Activated naive CD4-positive, alpha-beta T cell treated with anti-CD3 and anti-CD28 coated beads for 36 hours (primary cell): ENCODE measurements at regions of chr5 and their contacts with region 1.

Region 1: GRCh38 chr5:169583424-169584204 is at the start of gene SPDL1:
- DNase-seq: peak; percentile 97
- H3K4me3 Mint-ChIP-seq: peak within 1 kb of the TSS; percentile 96
- H3K27ac Mint-ChIP-seq: peak within 1 kb of the TSS; percentile 94
- H3K4me1 Mint-ChIP-seq: peaks cover 28% of the 10 kb centered on the region
- H3K27me3 Mint-ChIP-seq: no peaks in the 10 kb centered on the region
- total RNA-seq, gene SPDL1: 26.5 to 29.9 TPM

Region 2: DNA sequence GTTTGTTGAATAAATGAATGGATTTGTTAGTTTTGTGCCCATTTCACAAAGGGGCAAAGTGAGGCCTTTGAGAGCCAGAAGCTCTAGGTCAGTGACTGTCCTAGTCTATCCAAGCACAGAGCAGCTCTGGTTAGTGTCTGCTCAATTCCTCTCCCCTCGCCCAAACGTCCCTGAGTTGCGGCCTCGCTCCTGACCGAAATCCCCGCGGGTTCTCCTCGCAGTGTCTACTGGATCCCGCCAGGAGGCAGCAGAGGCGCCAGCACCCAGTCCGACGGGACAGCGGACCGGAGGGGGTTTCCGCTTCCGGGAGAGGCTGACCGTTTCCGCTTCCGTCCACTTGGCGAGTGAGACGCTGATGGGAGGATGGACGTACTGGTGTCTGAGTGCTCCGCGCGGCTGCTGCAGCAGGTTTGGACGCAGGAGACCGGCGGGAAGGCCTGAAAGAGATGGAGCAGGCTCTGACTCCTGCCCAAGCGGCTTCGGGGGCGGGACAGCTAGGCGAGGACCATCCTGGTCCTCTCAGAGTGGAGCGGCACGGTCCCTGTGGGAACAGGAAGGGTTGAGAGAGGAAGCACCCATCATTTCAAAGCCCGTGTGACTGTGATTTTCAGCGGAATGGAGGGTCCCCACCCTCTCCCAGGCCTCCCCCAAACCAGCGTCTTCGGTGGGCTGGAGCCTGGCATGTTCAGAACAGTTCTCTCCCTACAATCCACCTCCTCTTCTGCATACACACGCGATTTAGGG is 1097.3 kb before region 1 on chr5 and contains the start of gene RARS1:
- CTCF ChIA-PET with region 1: no interaction called
- intact Hi-C with region 1: loop called (anchors 5 kb)
- DNase-seq: peak; percentile 94
- H3K4me3 Mint-ChIP-seq: peak within 1 kb of the TSS; percentile 98
- H3K27ac Mint-ChIP-seq: peak within 1 kb of the TSS; percentile 91
- H3K4me1 Mint-ChIP-seq: peaks cover 34% of the 10 kb centered on the region
- H3K27me3 Mint-ChIP-seq: no peaks in the 10 kb centered on the region
- total RNA-seq, gene RARS1: 80.9 to 84.0 TPM

Region 3: GRCh38 chr5:168836603-168837231 is 746.9 kb before region 1 on chr5:
- CTCF ChIA-PET with region 1: interaction called, 3 read pairs
- intact Hi-C with region 1: loop called (anchors 2 kb)
- DNase-seq: peak; percentile 53
- H3K4me3 Mint-ChIP-seq: peak overlapping the region; percentile 46
- H3K27ac Mint-ChIP-seq: peak overlapping the region; percentile 73
- H3K4me1 Mint-ChIP-seq: peaks cover 31% of the 10 kb centered on the region
- H3K27me3 Mint-ChIP-seq: peaks cover 18% of the 10 kb centered on the region

Region 4: DNA sequence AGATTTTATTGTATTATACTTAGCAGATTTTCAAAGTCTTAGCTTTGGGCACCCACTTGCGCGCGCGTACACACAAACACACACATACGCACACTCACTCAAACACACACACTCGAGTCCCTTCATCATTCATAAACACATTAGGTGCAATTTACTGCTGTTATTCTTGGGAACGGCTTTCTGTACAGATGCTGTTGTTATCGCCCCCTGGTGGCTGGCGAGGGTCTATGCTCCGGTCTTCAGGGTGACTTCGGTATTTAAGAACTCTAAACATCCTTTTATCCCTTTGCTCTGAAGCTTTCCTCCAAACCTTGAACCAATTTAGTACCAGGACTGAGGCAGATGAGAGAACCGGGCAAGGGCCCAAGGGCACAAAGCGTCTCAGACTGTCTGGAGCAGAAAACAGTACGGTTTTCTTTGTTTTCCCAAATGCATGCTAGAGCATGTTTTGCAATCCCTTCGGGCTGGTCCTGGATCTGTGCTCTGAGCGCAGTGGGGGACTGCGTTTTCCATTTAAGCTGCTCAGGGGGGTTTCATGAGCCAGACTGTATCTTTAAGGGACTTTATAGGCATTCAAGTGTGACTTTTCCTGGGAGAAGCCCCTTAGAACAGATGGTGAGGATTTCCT is 281.0 kb before region 1 on chr5:
- CTCF ChIA-PET with region 1: no interaction called
- intact Hi-C with region 1: loop called (anchors 1 kb)
- DNase-seq: peak; percentile 79
- H3K4me3 Mint-ChIP-seq: no peak overlapping the region
- H3K27ac Mint-ChIP-seq: no peak overlapping the region
- H3K4me1 Mint-ChIP-seq: peaks cover 14% of the 10 kb centered on the region
- H3K27me3 Mint-ChIP-seq: peaks cover 51% of the 10 kb centered on the region

Region 5: DNA sequence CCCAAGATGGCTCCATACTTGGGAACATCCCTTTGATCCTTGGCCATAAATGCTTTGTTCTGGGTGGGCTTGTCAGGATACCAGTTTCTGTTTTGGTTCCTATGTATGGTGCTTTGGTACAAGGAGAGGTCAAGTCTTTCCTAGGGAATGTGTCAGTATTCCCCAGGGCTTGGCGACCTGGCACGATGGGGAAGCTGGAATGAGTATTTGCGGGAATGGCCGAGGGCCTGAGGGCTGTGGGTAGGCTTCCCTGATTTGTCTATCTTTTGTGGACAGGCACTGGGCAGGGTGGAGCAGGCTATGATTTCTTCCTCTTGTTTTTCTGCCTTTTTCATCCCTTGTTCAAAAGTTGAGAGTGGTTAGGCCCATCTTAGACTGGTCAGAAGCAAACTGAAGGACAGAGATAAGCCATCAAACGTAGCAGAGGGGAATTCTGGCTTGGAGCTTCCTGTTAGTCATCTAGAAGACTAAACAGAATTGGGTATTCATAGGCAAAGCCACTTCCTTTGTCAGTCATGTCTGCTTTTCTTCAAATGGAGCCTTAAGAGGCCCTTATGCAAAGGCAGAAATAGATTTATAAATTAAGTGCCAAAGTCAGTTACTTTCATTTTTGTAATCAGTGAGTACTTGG is 67.2 kb after region 1 on chr5:
- CTCF ChIA-PET with region 1: no interaction called
- intact Hi-C with region 1: loop called (anchors 1 kb)
- DNase-seq: peak; percentile 64
- H3K4me3 Mint-ChIP-seq: peak overlapping the region; percentile 49
- H3K27ac Mint-ChIP-seq: peak overlapping the region; percentile 94
- H3K4me1 Mint-ChIP-seq: peaks cover 92% of the 10 kb centered on the region
- H3K27me3 Mint-ChIP-seq: no peaks in the 10 kb centered on the region

Region 6: DNA sequence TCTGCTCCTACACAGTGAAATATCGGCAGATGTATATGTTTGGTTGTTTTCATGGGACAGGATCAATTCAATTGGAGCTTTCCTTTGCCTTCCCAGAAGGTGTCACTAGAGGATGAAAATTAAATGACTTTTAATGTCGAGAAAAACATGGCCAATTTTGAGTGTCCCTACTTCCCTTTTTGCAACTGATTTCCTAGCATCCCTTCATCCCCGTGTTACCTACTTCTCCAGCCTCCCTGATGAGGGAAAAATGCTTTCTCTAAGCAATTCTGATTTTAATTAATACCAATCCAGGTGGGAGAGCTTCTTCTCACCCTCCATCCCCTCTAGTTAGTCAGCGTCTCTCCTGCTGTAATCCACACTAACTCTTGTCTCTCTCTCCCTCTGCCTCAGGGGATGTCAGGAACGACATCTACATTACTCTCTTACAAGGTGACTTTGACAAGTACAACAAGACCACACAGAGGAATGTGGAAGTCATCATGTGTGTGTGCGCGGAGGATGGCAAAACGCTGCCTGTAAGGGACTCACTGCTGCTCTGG is 118.4 kb after region 1 on chr5:
- CTCF ChIA-PET with region 1: no interaction called
- intact Hi-C with region 1: loop called (anchors 1 kb)
- DNase-seq: no peak
- H3K4me3 Mint-ChIP-seq: no peak overlapping the region
- H3K27ac Mint-ChIP-seq: peak overlapping the region; percentile 59
- H3K4me1 Mint-ChIP-seq: peaks cover 41% of the 10 kb centered on the region
- H3K27me3 Mint-ChIP-seq: no peaks in the 10 kb centered on the region

Region 7: GRCh38 chr5:169812786-169813185 is 229.2 kb after region 1 on chr5:
- CTCF ChIA-PET with region 1: no interaction called
- intact Hi-C with region 1: no loop called
- DNase-seq: no peak
- H3K4me3 Mint-ChIP-seq: no peak overlapping the region
- H3K27ac Mint-ChIP-seq: no peak overlapping the region
- H3K4me1 Mint-ChIP-seq: no peaks in the 10 kb centered on the region
- H3K27me3 Mint-ChIP-seq: no peaks in the 10 kb centered on the region

Region 8: GRCh38 chr5:170338933-170339779 is 755.5 kb after region 1 on chr5:
- CTCF ChIA-PET with region 1: no interaction called
- intact Hi-C with region 1: loop called (anchors 10 kb)
- DNase-seq: peak; percentile 86
- H3K4me3 Mint-ChIP-seq: no peak overlapping the region
- H3K27ac Mint-ChIP-seq: peak overlapping the region; percentile 66
- H3K4me1 Mint-ChIP-seq: peaks cover 46% of the 10 kb centered on the region
- H3K27me3 Mint-ChIP-seq: no peaks in the 10 kb centered on the region